BJ (cell line): ENCODE measurements at regions of chr7 and their contacts with region 1.

Region 1: GRCh38 chr7:4883374-4884144 is at the start of gene RADIL:
- DNase-seq: peak; percentile 44
- H3K4me3 ChIP-seq: peak within 1 kb of the TSS; percentile 51
- H3K27me3 ChIP-seq: no peaks in the 10 kb centered on the region
- CTCF ChIP-seq: peak; percentile 97
- polyA plus RNA-seq, gene RADIL: 1.1 and 1.2 TPM in 2 replicates

Region 2: GRCh38 chr7:4797858-4798705 is 85.5 kb before region 1 on chr7:
- CTCF ChIA-PET with region 1: interaction called, 38 read pairs
- POLR2A ChIA-PET with region 1: no interaction called
- DNase-seq: no peak
- H3K4me3 ChIP-seq: no peak overlapping the region
- H3K27me3 ChIP-seq: no peaks in the 10 kb centered on the region
- CTCF ChIP-seq: peak; percentile 95

Region 3: GRCh38 chr7:4830176-4830575 is 53.4 kb before region 1 on chr7:
- CTCF ChIA-PET with region 1: interaction called, 19 read pairs
- POLR2A ChIA-PET with region 1: no interaction called
- DNase-seq: no peak
- H3K4me3 ChIP-seq: no peak overlapping the region
- H3K27me3 ChIP-seq: no peaks in the 10 kb centered on the region
- CTCF ChIP-seq: peak; percentile 83

Region 4: GRCh38 chr7:4849369-4849768 is 34.2 kb before region 1 on chr7:
- CTCF ChIA-PET with region 1: interaction called, 15 read pairs
- POLR2A ChIA-PET with region 1: no interaction called
- DNase-seq: peak; percentile 17
- H3K4me3 ChIP-seq: no peak overlapping the region
- H3K27me3 ChIP-seq: no peaks in the 10 kb centered on the region
- CTCF ChIP-seq: peak; percentile 46

Region 5: DNA sequence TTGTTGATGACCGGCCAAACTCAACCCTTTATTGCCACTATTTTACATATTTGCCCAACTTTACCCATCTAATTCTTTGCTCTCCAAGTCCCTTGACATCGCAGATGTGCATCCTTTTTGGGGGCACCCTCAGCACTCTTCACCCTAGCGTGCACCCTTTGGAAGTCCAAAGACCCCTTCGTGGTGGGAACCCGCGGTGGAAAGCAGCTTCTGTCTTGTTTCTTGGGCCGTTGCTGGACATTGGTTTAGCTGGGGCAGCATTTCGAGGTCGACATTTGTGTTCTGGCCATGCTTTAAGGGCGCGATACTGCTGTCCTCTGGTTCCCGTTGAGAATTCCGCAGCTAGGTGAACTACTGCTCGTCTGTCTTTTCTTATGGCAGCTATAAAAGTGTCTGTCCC is 21.4 kb before region 1 on chr7:
- CTCF ChIA-PET with region 1: interaction called, 11 read pairs
- POLR2A ChIA-PET with region 1: no interaction called
- DNase-seq: no peak
- H3K4me3 ChIP-seq: 0 out of 2 replicates have a peak overlapping the region, but pooled peaks have one; percentile 27
- H3K27me3 ChIP-seq: 0 out of 2 replicates have a peak, but pooled peaks cover 1% of the 10 kb centered on the region
- CTCF ChIP-seq: no peak

Region 6: GRCh38 chr7:4893929-4894475 is 10.4 kb after region 1 on chr7:
- CTCF ChIA-PET with region 1: interaction called, 12 read pairs
- POLR2A ChIA-PET with region 1: no interaction called
- DNase-seq: no peak
- H3K4me3 ChIP-seq: no peak overlapping the region
- H3K27me3 ChIP-seq: no peaks in the 10 kb centered on the region
- CTCF ChIP-seq: no peak